ENCODE measurements at regions of chr19 and their contacts with region 1.

Region 1: GRCh38 chr19:37779127-37780005 is at the start of gene ZNF573:
- DNase-seq: peak; percentile 84
- ATAC-seq: peak; percentile 91
- H3K4me3 ChIP-seq: peak within 1 kb of the TSS; percentile 75 to 90
- H3K27ac ChIP-seq: peak within 1 kb of the TSS; percentile 67
- H3K4me1 ChIP-seq: peaks cover 2 to 12% of the 10 kb centered on the region in 2 experiments; a peak in 2 of 4 replicates
- H3K27me3 ChIP-seq: no peaks in the 10 kb centered on the region
- CTCF ChIP-seq: no peak
- POLR2A ChIP-seq: no peak
- RAD21 ChIP-seq: no peak
- total RNA-seq, gene ZNF573: 2.4 TPM

Region 2: GRCh38 chr19:36489118-36489919 is 1290.0 kb before region 1 on chr19 and contains the start of gene ZNF566:
- CTCF ChIA-PET with region 1: no interaction called
- POLR2A ChIA-PET with region 1: no interaction called
- RAD21 ChIA-PET with region 1: no interaction called
- intact Hi-C with region 1: loop called (anchors 2 kb)
- DNase-seq: peak; percentile 93
- ATAC-seq: peak; percentile 96
- H3K4me3 ChIP-seq: peak within 1 kb of the TSS; percentile 68 to 91
- H3K27ac ChIP-seq: peak within 1 kb of the TSS; percentile 74
- H3K4me1 ChIP-seq: peaks cover 0 to 18% of the 10 kb centered on the region in 2 experiments; a peak in 2 of 4 replicates
- H3K27me3 ChIP-seq: no peaks in the 10 kb centered on the region
- CTCF ChIP-seq: no peak
- POLR2A ChIP-seq: peak; percentile 38
- RAD21 ChIP-seq: no peak
- total RNA-seq, gene ZNF566: 6.4 TPM

Region 3: DNA sequence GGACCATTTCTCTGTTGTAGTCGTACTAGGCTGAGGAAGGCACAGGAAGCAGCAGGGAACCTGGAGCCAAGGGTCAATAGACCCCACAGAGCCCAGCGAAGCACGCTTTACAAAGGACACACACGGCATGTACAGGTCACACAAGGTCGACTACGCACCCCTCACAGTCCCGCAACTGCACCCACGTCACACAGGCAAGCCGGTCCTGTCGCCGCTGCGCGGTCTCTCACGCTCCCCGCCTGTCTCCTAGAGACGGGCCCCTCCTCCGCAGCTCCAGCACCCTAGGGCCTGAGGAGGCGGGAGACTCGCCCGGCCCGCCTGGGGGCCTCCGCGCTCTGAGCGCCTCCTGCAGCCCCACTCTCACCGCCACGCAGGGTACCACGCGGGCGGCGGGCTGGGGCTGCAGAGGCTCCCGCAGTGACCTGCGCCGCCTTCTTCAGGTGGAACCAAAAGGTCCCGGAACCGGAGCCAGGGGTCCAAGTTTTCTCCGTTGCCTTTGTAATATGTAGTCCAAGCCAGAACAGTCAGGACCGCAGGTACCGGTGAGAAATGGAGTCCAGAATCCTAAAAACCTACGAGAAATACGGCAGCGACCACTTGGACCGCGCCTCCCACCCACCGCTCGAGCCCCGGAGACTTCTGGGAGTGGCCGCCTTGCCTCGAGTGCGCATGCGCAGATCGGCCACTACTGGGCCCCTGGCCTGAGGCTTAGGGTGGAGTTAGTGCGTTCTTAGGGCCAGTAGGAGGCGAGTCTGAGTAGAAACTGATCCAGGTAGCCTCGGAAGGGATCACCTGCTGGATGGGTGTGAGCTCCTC is 60.0 kb before region 1 on chr19 and contains the start of gene ZNF607:
- CTCF ChIA-PET with region 1: no interaction called
- POLR2A ChIA-PET with region 1: interaction called, 3 read pairs
- RAD21 ChIA-PET with region 1: no interaction called
- intact Hi-C with region 1: loop called (anchors 5 kb)
- DNase-seq: peak; percentile 94
- ATAC-seq: peak; percentile 98
- H3K4me3 ChIP-seq: peak within 1 kb of the TSS; percentile 75 to 83
- H3K27ac ChIP-seq: peak within 1 kb of the TSS; percentile 66
- H3K4me1 ChIP-seq: peaks cover 4 to 11% of the 10 kb centered on the region in 2 experiments; a peak in 1 of 4 replicates
- H3K27me3 ChIP-seq: no peaks in the 10 kb centered on the region
- CTCF ChIP-seq: peak; percentile 13 to 74 (median 59); a peak in 5 of 6 replicates
- POLR2A ChIP-seq: no peak
- RAD21 ChIP-seq: peak; percentile 39; the same call in 1 of the 2 replicates
- total RNA-seq, gene ZNF607: 7.1 TPM

Measured in HCT116 (cell line).